Activated B cell treated with CpG ODN at 0.5 μM for 24 hours (primary cell): ENCODE measurements at regions of chr4 and their contacts with region 1.

Region 1: DNA sequence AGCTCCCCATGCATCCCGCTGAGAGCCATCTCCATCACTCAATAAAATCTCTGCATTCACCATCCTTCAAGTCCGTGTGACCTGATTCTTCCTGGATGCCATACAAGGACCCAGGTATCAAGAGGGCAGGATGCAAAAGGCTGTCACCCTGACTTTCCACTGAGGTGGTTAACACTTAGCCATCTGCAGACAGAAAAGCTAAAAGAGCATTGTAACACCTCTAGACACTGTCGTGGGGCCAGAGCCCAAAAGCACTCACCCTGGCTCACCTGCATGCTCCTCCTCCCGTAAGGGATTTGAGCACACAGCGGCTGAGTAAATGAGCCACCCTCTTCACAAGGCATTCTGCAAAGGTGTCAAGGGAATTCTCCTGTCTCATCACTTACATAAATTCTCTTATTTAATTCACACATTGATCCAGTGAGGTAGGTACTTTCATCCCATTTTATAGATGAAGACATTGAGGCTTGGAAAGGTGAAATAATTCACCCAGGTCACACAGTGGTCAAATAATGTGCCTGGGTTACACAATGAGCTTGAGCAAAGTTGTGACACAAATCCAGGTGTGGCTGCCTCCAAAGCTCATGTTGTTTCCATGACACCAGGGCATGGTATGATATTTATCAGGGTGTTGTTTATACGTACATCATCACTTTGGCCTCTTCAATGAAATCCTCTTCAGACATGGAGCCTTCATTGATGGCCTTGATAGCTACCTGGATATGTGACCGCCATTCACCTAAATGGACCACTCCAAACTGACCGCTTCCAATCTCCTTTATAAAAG is 48.0 kb downstream of the TXK start:
- DNase-seq: no peak
- ATAC-seq: no peak
- H3K4me3 Mint-ChIP-seq: no peak overlapping the region
- H3K27ac Mint-ChIP-seq: no peak overlapping the region
- H3K4me1 Mint-ChIP-seq: no peaks in the 10 kb centered on the region
- H3K27me3 Mint-ChIP-seq: peaks cover 5% of the 10 kb centered on the region
- CTCF ChIP-seq: no peak

Region 2: GRCh38 chr4:47668810-47669408 is 417.1 kb before region 1 on chr4:
- CTCF ChIA-PET with region 1: interaction called, 4 read pairs
- POLR2A ChIA-PET with region 1: no interaction called
- intact Hi-C with region 1: loop called (anchors 1 kb)
- DNase-seq: no peak
- ATAC-seq: peak; percentile 54
- H3K4me3 Mint-ChIP-seq: no peak overlapping the region
- H3K27ac Mint-ChIP-seq: no peak overlapping the region
- H3K4me1 Mint-ChIP-seq: no peaks in the 10 kb centered on the region
- H3K27me3 Mint-ChIP-seq: peaks cover 7% of the 10 kb centered on the region
- CTCF ChIP-seq: peak; percentile 32

Region 3: DNA sequence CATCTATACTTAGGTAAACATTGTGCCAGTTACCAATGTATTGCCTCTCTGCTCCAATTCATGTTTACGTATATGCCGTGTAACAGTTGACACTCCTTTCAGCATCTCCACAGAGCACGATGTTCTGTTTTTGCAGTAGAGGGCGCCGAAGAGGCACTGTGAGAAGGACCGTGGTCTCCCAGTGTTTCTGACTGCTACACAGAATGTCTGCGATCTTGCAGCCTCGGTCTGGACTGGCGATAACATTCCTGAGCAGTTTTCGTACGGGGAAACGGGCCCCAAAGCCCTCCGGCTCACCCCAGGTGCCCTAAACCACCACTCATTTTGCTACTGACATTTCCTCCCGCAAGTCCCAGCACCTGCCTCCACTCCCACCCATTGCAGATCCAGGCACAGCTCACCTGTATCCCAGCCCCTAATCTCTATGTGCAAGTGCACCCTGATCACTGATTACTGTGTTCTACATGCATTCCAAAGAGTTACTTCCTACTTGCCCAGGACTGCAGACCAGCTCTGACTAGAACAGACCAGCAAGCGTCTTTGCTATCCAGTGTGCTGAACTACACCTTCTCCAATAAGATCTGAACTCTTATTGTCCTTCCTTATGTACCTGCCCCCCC is 159.3 kb before region 1 on chr4:
- CTCF ChIA-PET with region 1: interaction called, 3 read pairs
- POLR2A ChIA-PET with region 1: no interaction called
- intact Hi-C with region 1: loop called (anchors 1 kb)
- DNase-seq: no peak
- ATAC-seq: peak; percentile 85
- H3K4me3 Mint-ChIP-seq: peak overlapping the region; percentile 44
- H3K27ac Mint-ChIP-seq: no peak overlapping the region
- H3K4me1 Mint-ChIP-seq: peaks cover 26% of the 10 kb centered on the region
- H3K27me3 Mint-ChIP-seq: peaks cover 8% of the 10 kb centered on the region
- CTCF ChIP-seq: no peak

Region 4: GRCh38 chr4:48008021-48008596 is 77.9 kb before region 1 on chr4:
- CTCF ChIA-PET with region 1: interaction called, 127 read pairs
- POLR2A ChIA-PET with region 1: no interaction called
- intact Hi-C with region 1: loop called (anchors 1 kb)
- DNase-seq: no peak
- ATAC-seq: no peak
- H3K4me3 Mint-ChIP-seq: no peak overlapping the region
- H3K27ac Mint-ChIP-seq: no peak overlapping the region
- H3K4me1 Mint-ChIP-seq: no peaks in the 10 kb centered on the region
- H3K27me3 Mint-ChIP-seq: peaks cover 19% of the 10 kb centered on the region
- CTCF ChIP-seq: no peak

Region 5: GRCh38 chr4:48033825-48034413 is 52.1 kb before region 1 on chr4:
- CTCF ChIA-PET with region 1: interaction called, 90 read pairs
- POLR2A ChIA-PET with region 1: interaction called, 5 read pairs
- intact Hi-C with region 1: loop called (anchors 1 kb)
- DNase-seq: no peak
- ATAC-seq: peak; percentile 69
- H3K4me3 Mint-ChIP-seq: no peak overlapping the region
- H3K27ac Mint-ChIP-seq: peak overlapping the region; percentile 36
- H3K4me1 Mint-ChIP-seq: peaks cover 46% of the 10 kb centered on the region
- H3K27me3 Mint-ChIP-seq: peaks cover 2% of the 10 kb centered on the region
- CTCF ChIP-seq: peak; percentile 23

Region 6: DNA sequence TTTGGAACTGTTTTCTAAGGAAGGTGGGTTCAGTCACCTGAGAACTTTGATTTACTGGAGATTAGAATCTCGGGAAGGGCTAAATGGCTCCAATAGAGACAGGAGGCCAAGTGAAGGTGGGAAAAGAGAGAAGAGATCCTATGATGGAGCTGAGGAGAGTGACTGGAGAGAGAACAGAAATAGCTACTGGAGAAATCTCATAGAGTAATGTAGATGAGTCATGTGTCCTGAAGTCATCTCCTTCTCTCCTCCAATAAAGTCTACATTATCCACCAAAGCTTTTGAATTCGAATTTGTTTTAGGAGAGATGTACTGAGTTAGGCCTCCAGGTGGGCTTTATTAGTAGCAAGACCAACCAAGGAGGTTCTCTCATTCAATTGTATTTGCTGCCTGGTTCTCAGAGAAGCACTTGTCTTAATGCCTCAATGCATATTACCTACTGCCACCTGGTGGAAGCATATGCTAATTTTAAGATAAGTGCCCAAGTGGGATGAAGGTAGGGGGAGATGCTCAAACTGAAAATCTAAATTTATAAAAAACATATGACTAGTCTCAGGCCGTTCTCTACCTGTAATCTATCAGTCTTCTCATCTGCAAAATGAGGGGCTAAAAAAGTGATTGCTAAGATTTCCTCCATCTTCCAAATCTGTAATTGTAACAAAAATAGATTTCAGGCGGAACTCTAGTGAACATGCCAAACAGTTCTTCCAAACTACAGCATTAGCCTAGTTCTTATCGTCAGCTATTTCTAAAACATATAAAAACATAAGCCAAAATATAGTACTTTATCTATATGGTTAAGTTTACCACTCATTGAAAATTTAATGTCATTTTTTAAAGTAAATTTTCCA is 23.6 kb after region 1 on chr4:
- CTCF ChIA-PET with region 1: interaction called, 4 read pairs
- POLR2A ChIA-PET with region 1: no interaction called
- intact Hi-C with region 1: loop called (anchors 1 kb)
- DNase-seq: no peak
- ATAC-seq: peak; percentile 62
- H3K4me3 Mint-ChIP-seq: no peak overlapping the region
- H3K27ac Mint-ChIP-seq: no peak overlapping the region
- H3K4me1 Mint-ChIP-seq: no peaks in the 10 kb centered on the region
- H3K27me3 Mint-ChIP-seq: no peaks in the 10 kb centered on the region
- CTCF ChIP-seq: peak; percentile 44